GM10248 (cell line): ENCODE measurements at regions of chr2 and their contacts with region 1.

Region 1: DNA sequence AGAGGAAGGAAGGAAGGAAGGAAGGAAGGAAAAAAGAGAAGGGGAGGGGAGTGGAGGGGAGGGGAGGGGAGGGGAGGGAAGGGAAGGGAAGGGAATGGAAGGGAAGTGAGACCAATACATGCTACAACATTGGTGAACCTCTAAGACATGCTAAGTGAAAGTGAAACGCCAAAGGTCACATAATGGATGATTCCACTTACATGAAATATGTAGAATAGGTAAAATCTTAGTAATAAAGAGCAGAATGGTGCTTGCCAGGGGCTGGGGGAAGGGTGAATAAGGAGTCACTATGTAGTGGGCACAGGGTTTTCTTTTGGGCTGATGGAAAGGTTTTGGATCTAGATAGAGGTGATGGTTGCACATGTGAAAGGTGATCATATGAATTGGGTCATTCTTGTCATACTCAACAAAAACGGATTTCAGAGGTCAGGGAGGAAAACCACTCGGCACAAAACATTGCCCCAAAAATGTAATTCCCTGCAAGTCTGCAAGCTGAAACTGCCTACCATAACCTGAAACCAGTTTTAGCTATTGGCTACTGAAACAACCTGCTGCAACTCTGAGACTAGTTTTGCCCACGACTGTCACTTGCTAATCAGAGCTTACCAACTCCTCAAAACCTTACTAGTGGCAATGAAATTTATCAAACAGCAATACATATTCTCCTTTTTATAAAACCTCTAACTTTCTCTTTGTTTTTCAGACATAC is 59.2 kb downstream of the CCDC141 start:
- DNase-seq: peak; percentile 15
- CTCF ChIP-seq: no peak

Region 2: GRCh38 chr2:179044500-179044899 is 53.8 kb after region 1 on chr2:
- CTCF ChIA-PET with region 1: no interaction called
- POLR2A ChIA-PET with region 1: interaction called, 10 read pairs
- DNase-seq: no peak
- CTCF ChIP-seq: no peak